Calu3 (cell line): ENCODE measurements at regions of chr7 and their contacts with region 1.

Region 1: DNA sequence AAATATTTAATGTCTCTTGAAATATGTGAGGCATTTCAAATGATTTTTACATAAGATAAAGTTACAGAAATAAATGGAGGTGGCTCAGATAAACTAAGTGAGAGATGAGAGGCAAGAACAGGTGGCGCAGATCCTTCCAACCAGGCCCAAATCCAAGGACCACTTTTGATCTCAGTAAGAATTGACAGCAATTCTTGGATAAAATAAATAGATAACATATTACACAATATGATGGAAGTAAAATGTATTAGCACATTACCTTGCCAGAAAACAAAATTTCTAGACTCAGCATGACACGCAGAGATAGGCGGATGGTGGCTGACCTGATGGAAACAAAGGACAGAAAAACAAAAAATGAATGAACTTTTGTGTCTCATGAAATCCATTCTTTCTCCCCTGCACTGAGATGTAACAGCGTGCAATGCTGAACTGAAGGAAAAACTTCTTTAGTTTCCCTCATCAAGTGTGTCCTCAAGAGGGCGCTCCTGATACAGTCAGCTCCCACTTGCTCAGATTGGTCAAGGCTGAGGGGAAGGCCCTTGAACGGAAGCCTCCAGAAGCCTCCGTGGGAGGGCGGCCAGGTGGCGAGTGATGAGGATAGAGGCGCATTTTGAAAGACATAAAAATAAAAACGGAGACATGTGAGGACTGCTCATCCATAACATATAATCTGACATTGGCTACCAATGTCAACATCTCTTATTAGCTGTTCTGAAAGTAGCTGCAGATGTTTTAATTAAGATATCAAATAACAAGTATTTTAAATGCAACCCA is 62.8 kb upstream of the GSDME start:
- DNase-seq: peak; percentile 92
- H3K4me3 Mint-ChIP-seq: peak overlapping the region; percentile 31
- H3K27ac Mint-ChIP-seq: peak overlapping the region; percentile 88
- H3K4me1 Mint-ChIP-seq: peaks cover 55% of the 10 kb centered on the region
- H3K27me3 Mint-ChIP-seq: no peaks in the 10 kb centered on the region
- CTCF ChIP-seq: peak; percentile 96

Region 2: DNA sequence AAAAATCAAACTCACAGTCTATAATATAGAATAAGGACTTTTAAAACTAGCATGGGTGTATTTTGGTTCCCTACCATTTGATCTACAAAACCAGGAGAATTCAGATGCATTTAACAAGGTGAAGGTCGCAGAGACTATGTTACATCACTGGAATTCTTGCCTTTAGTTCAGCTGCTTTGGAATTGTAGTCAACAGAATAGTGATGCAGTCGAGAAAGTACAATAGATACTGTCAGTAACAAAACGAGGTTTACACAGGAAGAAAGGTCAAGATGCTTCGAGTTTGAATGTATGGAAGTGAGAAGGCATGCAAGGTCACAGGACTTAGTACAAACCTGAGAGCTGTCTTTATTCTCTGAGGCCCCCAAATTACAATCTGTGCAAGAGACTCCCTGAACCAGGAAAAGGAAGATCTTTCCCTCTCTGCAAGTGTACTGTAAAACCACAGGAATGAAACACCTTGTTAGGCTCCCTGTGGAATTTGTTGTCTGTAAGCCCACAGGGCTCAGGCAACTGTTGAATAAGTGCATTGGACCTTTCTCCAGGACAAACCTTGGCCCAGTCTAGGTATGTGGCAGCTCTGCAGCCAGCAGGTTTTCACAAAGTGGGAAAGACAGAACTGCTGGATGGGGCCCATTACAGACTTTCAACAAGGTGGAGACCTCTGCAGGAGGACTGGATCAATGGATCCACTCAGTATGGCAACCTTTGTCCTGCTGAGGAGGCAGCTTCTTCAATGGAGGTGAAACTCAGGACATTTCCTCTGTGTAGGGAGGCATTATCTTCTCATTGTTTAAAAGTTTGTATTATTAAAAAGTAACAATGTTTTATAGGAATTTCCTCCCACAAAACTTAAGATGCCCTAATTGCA is 38.2 kb after region 1 on chr7:
- CTCF ChIA-PET with region 1: interaction called, 10 read pairs
- intact Hi-C with region 1: loop called (anchors 1 kb)
- DNase-seq: peak; percentile 17
- H3K4me3 Mint-ChIP-seq: no peak overlapping the region
- H3K27ac Mint-ChIP-seq: no peak overlapping the region
- H3K4me1 Mint-ChIP-seq: peaks cover 22% of the 10 kb centered on the region
- H3K27me3 Mint-ChIP-seq: no peaks in the 10 kb centered on the region
- CTCF ChIP-seq: no peak

Region 3: GRCh38 chr7:24896031-24896501 is 76.0 kb after region 1 on chr7:
- CTCF ChIA-PET with region 1: interaction called, 3 read pairs
- intact Hi-C with region 1: loop called (anchors 2 kb)
- DNase-seq: no peak
- H3K4me3 Mint-ChIP-seq: no peak overlapping the region
- H3K27ac Mint-ChIP-seq: no peak overlapping the region
- H3K4me1 Mint-ChIP-seq: peaks cover 29% of the 10 kb centered on the region
- H3K27me3 Mint-ChIP-seq: no peaks in the 10 kb centered on the region
- CTCF ChIP-seq: peak; percentile 29

Region 4: GRCh38 chr7:24979863-24980533 is 159.9 kb after region 1 on chr7 and contains the start of gene OSBPL3:
- CTCF ChIA-PET with region 1: interaction called, 21 read pairs
- intact Hi-C with region 1: loop called (anchors 1 kb)
- DNase-seq: peak; percentile 99
- H3K4me3 Mint-ChIP-seq: peak within 1 kb of the TSS; percentile 86
- H3K27ac Mint-ChIP-seq: peak within 1 kb of the TSS; percentile 92
- H3K4me1 Mint-ChIP-seq: peaks cover 48% of the 10 kb centered on the region
- H3K27me3 Mint-ChIP-seq: no peaks in the 10 kb centered on the region
- CTCF ChIP-seq: no peak
- total RNA-seq, gene OSBPL3: 124 and 136 TPM in 2 replicates

Region 5: DNA sequence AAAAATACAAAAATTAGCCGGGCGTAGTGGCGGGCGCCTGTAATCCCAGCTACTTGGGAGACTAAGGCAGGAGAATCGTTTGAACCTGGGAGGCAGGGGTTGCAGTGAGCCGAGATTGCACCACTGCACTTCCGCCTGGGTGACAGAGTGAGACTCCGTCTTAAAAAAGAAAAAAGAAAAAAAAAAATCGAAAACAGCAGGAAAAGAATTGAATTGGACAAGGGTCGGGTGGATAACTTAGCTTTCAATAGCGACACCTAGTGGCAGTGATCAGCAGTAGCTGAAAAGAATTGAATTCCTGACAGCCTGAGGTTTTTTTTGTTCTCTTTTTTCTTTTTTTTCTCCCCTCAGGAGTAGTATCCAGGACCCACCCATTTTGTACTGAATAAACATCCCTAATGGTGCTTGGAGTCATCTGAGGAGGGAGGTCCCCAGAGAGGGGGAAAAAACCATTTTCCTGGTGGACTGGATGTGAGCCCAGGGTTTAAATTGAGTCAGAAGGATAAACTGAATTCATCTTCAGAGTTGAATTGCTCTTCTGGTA is 249.9 kb after region 1 on chr7:
- CTCF ChIA-PET with region 1: interaction called, 15 read pairs
- intact Hi-C with region 1: loop called (anchors 1 kb)
- DNase-seq: peak; percentile 77
- H3K4me3 Mint-ChIP-seq: peak overlapping the region; percentile 21
- H3K27ac Mint-ChIP-seq: peak overlapping the region; percentile 35
- H3K4me1 Mint-ChIP-seq: peaks cover 39% of the 10 kb centered on the region
- H3K27me3 Mint-ChIP-seq: no peaks in the 10 kb centered on the region
- CTCF ChIP-seq: peak; percentile 74